ENCODE measurements at regions of chr3 and their contacts with region 1.

Region 1: DNA sequence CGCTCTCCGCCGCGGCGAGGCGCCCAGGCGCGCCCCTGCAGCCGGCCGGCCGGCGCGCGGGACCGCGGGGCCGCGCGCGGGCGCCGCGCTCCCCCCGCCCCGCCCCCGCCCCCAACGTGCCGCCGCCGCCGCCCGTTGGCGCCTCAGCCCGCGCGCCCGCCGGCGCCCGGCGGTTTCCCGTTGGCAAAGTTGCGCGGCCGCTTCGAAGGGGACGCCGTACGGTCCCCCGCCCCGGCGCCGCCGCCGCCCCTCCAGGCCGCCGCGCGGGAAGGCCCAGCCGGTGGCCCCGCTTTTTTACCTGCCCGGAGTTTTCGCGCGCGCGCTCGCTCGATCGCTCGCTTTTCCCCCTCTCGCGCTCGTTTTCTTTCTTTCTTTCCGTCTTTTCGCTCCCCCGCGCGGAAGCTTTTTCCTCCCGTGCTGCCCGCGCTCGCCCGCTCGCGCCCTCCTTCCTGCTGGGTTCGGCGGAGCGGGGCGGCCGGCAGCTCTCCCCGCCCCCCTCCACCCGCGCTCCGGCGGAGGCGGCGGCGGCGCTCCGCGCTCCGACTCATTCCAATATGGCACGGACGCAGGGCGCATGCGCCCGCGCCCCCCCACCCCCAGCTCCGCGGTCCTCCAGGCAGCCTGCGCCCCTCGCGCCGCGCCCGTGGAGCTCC is at the start of gene SFMBT1:
- DNase-seq: no peak
- ATAC-seq: peak; percentile 50
- H3K4me3 ChIP-seq: peak within 1 kb of the TSS; percentile 90
- H3K27ac ChIP-seq: peak within 1 kb of the TSS; percentile 84
- H3K4me1 ChIP-seq: peaks cover 24% of the 10 kb centered on the region
- H3K27me3 ChIP-seq: no peaks in the 10 kb centered on the region
- CTCF ChIP-seq: no peak
- EP300 ChIP-seq: no peak
- POLR2A ChIP-seq: 0 out of 2 replicates have a peak, but pooled peaks have one; percentile 19
- RAD21 ChIP-seq: no peak
- polyA plus RNA-seq, gene SFMBT1: 3.2 to 4.3 TPM

Region 2: DNA sequence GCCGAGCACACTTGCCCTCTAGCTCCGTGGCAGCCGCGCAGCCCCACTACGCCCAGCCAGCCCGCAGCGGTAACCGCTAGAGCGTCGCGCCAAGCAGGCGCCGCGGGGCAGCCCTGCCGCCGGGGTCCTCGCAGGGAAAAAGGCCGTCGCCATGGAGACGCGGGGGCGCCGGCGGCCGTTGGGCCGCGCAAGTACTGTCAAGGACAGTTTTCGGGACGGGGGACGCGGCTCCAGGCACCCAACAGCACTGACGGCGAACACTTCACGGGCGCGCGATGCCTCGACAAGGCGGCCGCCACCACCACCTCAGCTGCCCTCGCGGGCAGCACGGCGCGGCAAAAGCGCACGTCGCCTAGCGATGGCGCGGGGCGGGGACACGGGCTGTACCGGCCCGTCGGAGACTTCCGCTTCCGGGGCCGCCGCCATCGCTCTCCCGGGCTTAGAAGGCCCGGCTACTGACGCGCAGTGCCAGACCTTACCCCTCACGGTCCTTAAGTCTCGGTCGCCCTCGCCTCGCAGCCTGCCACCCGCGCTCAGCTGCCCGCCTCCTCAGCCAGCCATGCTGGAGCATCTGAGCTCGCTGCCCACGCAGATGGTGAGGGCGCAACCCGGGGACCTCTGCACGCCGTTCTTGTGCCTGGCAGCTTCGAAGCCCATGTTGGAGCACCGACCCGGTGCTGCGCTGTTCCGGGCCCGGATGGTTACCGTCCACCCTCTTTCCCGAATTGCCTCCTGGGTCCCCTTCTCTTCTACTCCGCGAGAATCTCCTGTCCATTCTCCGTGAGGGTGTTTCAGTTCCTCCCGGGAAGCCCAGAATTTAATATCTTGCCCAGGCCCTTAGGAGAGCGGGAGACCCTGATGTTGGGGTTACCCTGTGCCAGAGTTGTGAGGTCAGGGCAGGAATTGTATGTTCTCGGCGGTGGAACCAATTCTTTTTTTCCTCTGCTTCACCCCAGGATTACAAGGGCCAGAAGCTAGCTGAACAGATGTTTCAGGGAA is 339.7 kb before region 1 on chr3 and contains the starts of genes GLT8D1 and SPCS1:
- CTCF ChIA-PET with region 1: no interaction called
- POLR2A ChIA-PET with region 1: no interaction called
- RAD21 ChIA-PET with region 1: no interaction called
- SMC1A ChIA-PET with region 1: no interaction called
- in situ Hi-C with region 1: no loop called
- intact Hi-C with region 1: loop called (anchors 10 kb)
- DNase-seq: no peak
- ATAC-seq: peak; percentile 92
- H3K4me3 ChIP-seq: peak within 1 kb of the TSS; percentile 90
- H3K27ac ChIP-seq: peak within 1 kb of the TSS; percentile 75
- H3K4me1 ChIP-seq: peaks cover 30% of the 10 kb centered on the region
- H3K27me3 ChIP-seq: no peaks in the 10 kb centered on the region
- CTCF ChIP-seq: no peak
- EP300 ChIP-seq: no peak
- POLR2A ChIP-seq: peak; percentile 93
- RAD21 ChIP-seq: no peak
- polyA plus RNA-seq, gene GLT8D1: 25.3 to 32.6 TPM
- polyA plus RNA-seq, gene SPCS1: 814 to 994 TPM

Region 3: GRCh38 chr3:52983336-52983807 is 62.3 kb before region 1 on chr3:
- CTCF ChIA-PET with region 1: interaction called, 8 read pairs
- POLR2A ChIA-PET with region 1: interaction called, 4 read pairs
- RAD21 ChIA-PET with region 1: interaction called, 7 read pairs
- SMC1A ChIA-PET with region 1: interaction called, 4 read pairs
- in situ Hi-C with region 1: no loop called
- intact Hi-C with region 1: loop called (anchors 5 kb)
- DNase-seq: peak; percentile 88
- ATAC-seq: peak; percentile 96
- H3K4me3 ChIP-seq: peak overlapping the region; percentile 41; the same call in 1 of the 2 replicates
- H3K27ac ChIP-seq: peak overlapping the region; percentile 90
- H3K4me1 ChIP-seq: peaks cover 18% of the 10 kb centered on the region
- H3K27me3 ChIP-seq: no peaks in the 10 kb centered on the region
- CTCF ChIP-seq: no peak
- EP300 ChIP-seq: peak; percentile 95 to 98
- POLR2A ChIP-seq: peak; percentile 32; the same call in 1 of the 2 replicates
- RAD21 ChIP-seq: peak; percentile 29; the same call in 1 of the 2 replicates

Region 4: GRCh38 chr3:52998730-52999509 is 46.7 kb before region 1 on chr3:
- CTCF ChIA-PET with region 1: no interaction called
- POLR2A ChIA-PET with region 1: interaction called, 10 read pairs
- RAD21 ChIA-PET with region 1: no interaction called
- SMC1A ChIA-PET with region 1: interaction called, 3 read pairs
- in situ Hi-C with region 1: no loop called
- intact Hi-C with region 1: no loop called
- DNase-seq: no peak
- ATAC-seq: no peak
- H3K4me3 ChIP-seq: no peak overlapping the region
- H3K27ac ChIP-seq: no peak overlapping the region
- H3K4me1 ChIP-seq: no peaks in the 10 kb centered on the region
- H3K27me3 ChIP-seq: no peaks in the 10 kb centered on the region
- CTCF ChIP-seq: no peak
- EP300 ChIP-seq: no peak
- POLR2A ChIP-seq: no peak
- RAD21 ChIP-seq: no peak

Region 5: GRCh38 chr3:53357457-53357856 is 311.8 kb after region 1 on chr3:
- CTCF ChIA-PET with region 1: no interaction called
- POLR2A ChIA-PET with region 1: no interaction called
- RAD21 ChIA-PET with region 1: no interaction called
- SMC1A ChIA-PET with region 1: no interaction called
- in situ Hi-C with region 1: no loop called
- intact Hi-C with region 1: no loop called
- DNase-seq: no peak
- ATAC-seq: no peak
- H3K4me3 ChIP-seq: no peak overlapping the region
- H3K27ac ChIP-seq: no peak overlapping the region
- H3K4me1 ChIP-seq: no peaks in the 10 kb centered on the region
- H3K27me3 ChIP-seq: no peaks in the 10 kb centered on the region
- CTCF ChIP-seq: no peak
- EP300 ChIP-seq: no peak
- POLR2A ChIP-seq: no peak
- RAD21 ChIP-seq: no peak

Measured in GM12878 (cell line).